ENCODE measurements at regions of chr3 and their contacts with region 1.

Region 1: GRCh38 chr3:129627429-129628168 is 21.1 kb upstream of the PLXND1 start:
- DNase-seq: peak; percentile 83
- H3K27ac ChIP-seq: peak overlapping the region; percentile 99
- CTCF ChIP-seq: peak; percentile 79

Region 2: GRCh38 chr3:129824926-129825541 is 197.4 kb after region 1 on chr3:
- CTCF ChIA-PET with region 1: interaction called, 10 read pairs
- POLR2A ChIA-PET with region 1: no interaction called
- DNase-seq: peak; percentile 59
- H3K27ac ChIP-seq: no peak overlapping the region
- CTCF ChIP-seq: peak; percentile 74

Measured in RWPE1 (cell line).